Body of pancreas (tissue), 4 donors: ENCODE measurements at regions of chr10 and their contacts with region 1.

Region 1: GRCh38 chr10:68096913-68097503 is 12.3 kb upstream of the MYPN start:
- DNase-seq: peak; percentile 37 to 85 (median 60)
- ATAC-seq: peak; percentile 89
- H3K4me3 ChIP-seq: no peak overlapping the region
- H3K27ac ChIP-seq: peak overlapping the region in 1 of 4 donors; percentile 25
- H3K4me1 ChIP-seq: no peaks in the 10 kb centered on the region
- H3K27me3 ChIP-seq: no peaks in the 10 kb centered on the region
- CTCF ChIP-seq: no peak
- POLR2A ChIP-seq: no peak

Region 2: GRCh38 chr10:68139448-68140272 is 42.7 kb after region 1 on chr10:
- intact Hi-C with region 1: loop called (anchors 10 kb)
- DNase-seq: no peak
- ATAC-seq: no peak
- H3K4me3 ChIP-seq: no peak overlapping the region
- H3K27ac ChIP-seq: no peak overlapping the region
- H3K4me1 ChIP-seq: peaks cover 2% of the 10 kb centered on the region
- H3K27me3 ChIP-seq: no peaks in the 10 kb centered on the region
- CTCF ChIP-seq: no peak
- POLR2A ChIP-seq: no peak